Activated B cell treated with CpG ODN at 0.5 μM for 24 hours (primary cell): ENCODE measurements at regions of chr14 and their contacts with region 1.

Region 1: GRCh38 chr14:22386924-22387775 is 201.9 kb downstream of the DAD1 start:
- DNase-seq: peak; percentile 46
- ATAC-seq: peak; percentile 15
- H3K4me3 Mint-ChIP-seq: peak overlapping the region; percentile 24
- H3K27ac Mint-ChIP-seq: peak overlapping the region; percentile 98
- H3K4me1 Mint-ChIP-seq: peaks cover 78% of the 10 kb centered on the region
- H3K27me3 Mint-ChIP-seq: no peaks in the 10 kb centered on the region
- CTCF ChIP-seq: peak; percentile 18

Region 2: DNA sequence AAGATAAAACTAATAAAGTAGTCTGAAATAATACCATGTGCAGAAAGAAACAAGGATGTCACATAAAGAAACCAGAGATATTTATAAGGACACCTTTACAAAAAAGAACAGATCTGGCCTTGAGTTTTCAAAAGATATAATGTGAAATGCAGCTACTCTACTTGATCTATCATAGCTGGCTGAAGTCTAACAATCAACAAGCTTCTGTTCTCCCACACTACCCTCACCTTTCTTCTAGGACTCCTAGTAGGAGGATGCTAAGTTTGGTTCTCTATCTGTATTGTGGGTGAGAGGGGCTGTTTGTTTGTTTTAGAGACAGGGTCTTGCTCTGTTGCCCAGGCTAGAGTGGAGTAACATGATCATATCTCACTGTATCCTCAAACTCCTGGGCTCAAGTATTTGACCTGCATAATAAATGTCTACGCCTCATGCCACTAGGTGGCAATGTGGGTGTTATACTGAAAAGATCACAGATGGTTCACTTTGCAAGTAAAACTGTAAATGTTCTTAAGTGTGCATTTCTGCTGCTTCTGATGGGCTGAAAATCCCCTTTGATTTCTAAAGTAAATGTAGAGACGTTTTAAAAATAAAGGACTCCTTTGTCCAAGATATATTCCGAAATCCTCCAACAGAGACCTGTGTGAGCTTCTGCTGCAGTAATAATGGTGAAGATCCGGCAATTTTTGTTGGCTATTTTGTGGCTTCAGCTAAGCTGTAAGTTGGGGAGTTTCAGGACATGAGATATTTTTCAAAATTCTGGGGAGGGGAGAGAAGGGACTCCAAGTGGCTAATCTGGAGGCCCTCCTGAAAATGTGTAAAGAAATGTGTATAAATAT is 67.4 kb before region 1 on chr14:
- CTCF ChIA-PET with region 1: interaction called, 17 read pairs
- POLR2A ChIA-PET with region 1: no interaction called
- intact Hi-C with region 1: loop called (anchors 1 kb)
- DNase-seq: no peak
- ATAC-seq: peak; percentile 77
- H3K4me3 Mint-ChIP-seq: no peak overlapping the region
- H3K27ac Mint-ChIP-seq: no peak overlapping the region
- H3K4me1 Mint-ChIP-seq: no peaks in the 10 kb centered on the region
- H3K27me3 Mint-ChIP-seq: peaks cover 4% of the 10 kb centered on the region
- CTCF ChIP-seq: no peak

Region 3: GRCh38 chr14:22448905-22449599 is 61.9 kb after region 1 on chr14:
- CTCF ChIA-PET with region 1: interaction called, 10 read pairs
- POLR2A ChIA-PET with region 1: no interaction called
- intact Hi-C with region 1: no loop called
- DNase-seq: no peak
- ATAC-seq: peak; percentile 58
- H3K4me3 Mint-ChIP-seq: peak overlapping the region; percentile 3
- H3K27ac Mint-ChIP-seq: peak overlapping the region; percentile 78
- H3K4me1 Mint-ChIP-seq: peaks cover 23% of the 10 kb centered on the region
- H3K27me3 Mint-ChIP-seq: no peaks in the 10 kb centered on the region
- CTCF ChIP-seq: no peak

Region 4: DNA sequence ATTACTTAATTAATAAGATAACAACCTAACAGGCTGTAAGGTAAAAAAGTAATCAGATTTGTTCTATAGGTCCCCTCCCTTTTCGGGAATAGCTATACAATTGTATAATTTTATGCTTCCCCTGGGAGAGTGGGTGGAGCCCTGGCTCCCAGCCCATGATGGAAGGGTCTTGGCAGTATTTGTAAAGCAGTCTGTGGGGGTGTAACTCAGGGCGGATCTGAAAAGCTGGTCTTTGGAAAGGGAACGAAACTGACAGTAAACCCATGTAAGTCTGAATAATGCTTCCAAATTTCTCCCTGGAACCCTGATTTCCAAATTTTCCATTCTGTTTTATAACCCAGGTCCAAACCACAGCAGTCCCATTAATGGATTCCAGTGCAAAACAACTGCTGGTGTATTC is 91.5 kb after region 1 on chr14:
- CTCF ChIA-PET with region 1: interaction called, 103 read pairs
- POLR2A ChIA-PET with region 1: interaction called, 7 read pairs
- intact Hi-C with region 1: loop called (anchors 1 kb)
- DNase-seq: no peak
- ATAC-seq: no peak
- H3K4me3 Mint-ChIP-seq: peak overlapping the region; percentile 42
- H3K27ac Mint-ChIP-seq: peak overlapping the region; percentile 85
- H3K4me1 Mint-ChIP-seq: peaks cover 98% of the 10 kb centered on the region
- H3K27me3 Mint-ChIP-seq: no peaks in the 10 kb centered on the region
- CTCF ChIP-seq: no peak

Region 5: DNA sequence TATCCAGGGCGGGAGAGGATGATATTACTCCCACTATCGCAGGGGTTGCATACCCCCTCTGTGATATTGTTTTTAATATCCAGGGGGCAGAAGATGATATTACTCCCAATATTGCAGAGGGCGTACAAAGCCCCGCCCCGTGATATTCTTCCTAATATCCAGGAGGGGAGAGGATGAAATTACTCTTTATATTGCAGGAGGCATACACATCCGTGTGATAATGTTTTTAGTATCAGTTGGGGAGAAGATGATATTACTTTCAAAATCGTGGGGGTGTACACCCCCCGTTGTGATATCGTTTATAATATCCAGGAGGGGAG is 326.4 kb after region 1 on chr14:
- CTCF ChIA-PET with region 1: no interaction called
- POLR2A ChIA-PET with region 1: no interaction called
- intact Hi-C with region 1: loop called (anchors 2 kb)
- DNase-seq: no peak
- ATAC-seq: no peak
- H3K4me3 Mint-ChIP-seq: peak overlapping the region; percentile 88
- H3K27ac Mint-ChIP-seq: peak overlapping the region; percentile 78
- H3K4me1 Mint-ChIP-seq: peaks cover 13% of the 10 kb centered on the region
- H3K27me3 Mint-ChIP-seq: peaks cover 29% of the 10 kb centered on the region
- CTCF ChIP-seq: no peak

Region 6: DNA sequence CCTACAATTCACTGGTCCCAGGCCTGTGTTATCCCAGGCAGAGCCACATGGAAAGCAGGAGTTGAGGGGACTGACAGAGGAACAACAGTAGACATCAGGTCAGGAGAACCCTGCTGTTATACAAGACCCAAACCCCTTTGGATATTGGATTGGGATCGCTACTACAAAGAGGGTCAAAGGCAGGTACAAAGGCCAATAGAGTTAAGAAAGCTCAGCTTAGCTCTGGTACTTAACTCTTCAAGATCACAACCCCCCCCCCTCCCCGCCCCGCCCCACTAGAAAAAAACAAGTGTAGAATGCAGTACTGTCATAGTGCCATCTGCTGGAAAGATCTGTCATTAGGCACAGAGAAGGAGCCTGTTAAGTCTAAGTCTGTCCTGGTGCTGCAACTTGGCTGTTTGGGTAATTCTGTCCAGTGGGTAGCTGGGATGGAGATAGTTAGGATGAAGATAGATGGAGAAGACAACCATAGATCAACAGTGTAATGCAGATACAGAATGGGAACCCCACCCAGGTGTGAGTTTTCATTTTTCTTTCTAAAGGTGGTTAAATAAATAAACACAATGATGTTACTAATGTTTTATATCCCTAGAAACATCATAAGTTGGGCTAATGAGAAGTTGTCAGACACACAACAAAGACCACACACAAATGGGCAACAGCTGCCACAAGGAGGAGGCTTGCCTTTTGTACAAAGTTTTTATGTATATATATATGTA is 513.1 kb after region 1 on chr14:
- CTCF ChIA-PET with region 1: interaction called, 4 read pairs
- POLR2A ChIA-PET with region 1: no interaction called
- intact Hi-C with region 1: loop called (anchors 2 kb)
- DNase-seq: no peak
- ATAC-seq: peak; percentile 91
- H3K4me3 Mint-ChIP-seq: no peak overlapping the region
- H3K27ac Mint-ChIP-seq: peak overlapping the region; percentile 43
- H3K4me1 Mint-ChIP-seq: peaks cover 5% of the 10 kb centered on the region
- H3K27me3 Mint-ChIP-seq: no peaks in the 10 kb centered on the region
- CTCF ChIP-seq: no peak

Region 7: GRCh38 chr14:23057757-23058653 is 670.9 kb after region 1 on chr14:
- CTCF ChIA-PET with region 1: interaction called, 3 read pairs
- POLR2A ChIA-PET with region 1: no interaction called
- intact Hi-C with region 1: loop called (anchors 2 kb)
- DNase-seq: peak; percentile 80
- ATAC-seq: peak; percentile 73
- H3K4me3 Mint-ChIP-seq: peak overlapping the region; percentile 88
- H3K27ac Mint-ChIP-seq: no peak overlapping the region
- H3K4me1 Mint-ChIP-seq: peaks cover 18% of the 10 kb centered on the region
- H3K27me3 Mint-ChIP-seq: peaks cover 2% of the 10 kb centered on the region
- CTCF ChIP-seq: peak; percentile 58